MCF 10A (cell line): ENCODE measurements at regions of chr3 and their contacts with region 1.

Region 1: GRCh38 chr3:69200384-69201068 is 78.1 kb upstream of the LMOD3 start:
- DNase-seq: peak; percentile 92
- H3K4me3 Mint-ChIP-seq: peak overlapping the region; percentile 75
- H3K27ac Mint-ChIP-seq: peak overlapping the region; percentile 93
- H3K4me1 Mint-ChIP-seq: peaks cover 24% of the 10 kb centered on the region
- H3K27me3 Mint-ChIP-seq: no peaks in the 10 kb centered on the region
- CTCF ChIP-seq: no peak

Region 2: GRCh38 chr3:69181592-69182211 is 18.8 kb before region 1 on chr3:
- CTCF ChIA-PET with region 1: interaction called, 4 read pairs
- POLR2A ChIA-PET with region 1: interaction called, 21 read pairs
- intact Hi-C with region 1: no loop called
- DNase-seq: peak; percentile 38
- H3K4me3 Mint-ChIP-seq: no peak overlapping the region
- H3K27ac Mint-ChIP-seq: peak overlapping the region; percentile 46
- H3K4me1 Mint-ChIP-seq: peaks cover 24% of the 10 kb centered on the region
- H3K27me3 Mint-ChIP-seq: no peaks in the 10 kb centered on the region
- CTCF ChIP-seq: no peak

Region 3: DNA sequence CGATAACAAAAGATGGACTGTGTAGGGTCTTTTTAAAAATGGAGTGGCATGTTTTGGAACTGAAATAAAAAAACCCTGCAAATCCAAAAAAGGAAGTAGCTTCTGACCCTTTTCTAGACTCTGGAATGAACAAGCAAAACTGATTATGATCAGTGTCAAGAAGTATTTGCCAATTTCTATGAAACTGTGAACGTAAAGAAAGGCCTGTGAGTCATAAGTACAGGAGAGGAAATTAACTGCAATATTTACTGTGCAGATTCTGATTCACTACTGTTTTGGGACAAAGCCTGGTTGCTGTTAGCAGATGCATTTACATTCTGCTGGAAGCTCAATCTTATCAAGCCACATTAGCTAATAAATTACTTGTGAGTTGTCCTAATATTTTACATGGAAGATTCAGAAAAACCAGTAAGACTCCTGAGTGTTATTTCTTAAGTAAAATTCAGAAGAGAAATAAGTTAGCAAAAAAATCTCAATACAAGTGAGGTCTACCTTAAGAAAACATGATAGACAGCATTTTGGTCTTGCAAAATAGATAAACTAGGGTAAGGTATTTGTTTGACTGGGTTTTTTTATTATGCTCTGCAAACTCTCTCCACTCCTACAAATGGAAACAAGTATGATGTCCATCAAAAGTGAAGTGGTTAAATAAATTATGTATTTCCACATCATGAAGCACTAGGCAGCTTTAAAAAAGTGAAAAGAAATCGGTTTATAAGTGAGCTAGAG is 12.0 kb after region 1 on chr3:
- CTCF ChIA-PET with region 1: interaction called, 3 read pairs
- POLR2A ChIA-PET with region 1: interaction called, 47 read pairs
- intact Hi-C with region 1: no loop called
- DNase-seq: peak; percentile 86
- H3K4me3 Mint-ChIP-seq: peak overlapping the region; percentile 16
- H3K27ac Mint-ChIP-seq: peak overlapping the region; percentile 93
- H3K4me1 Mint-ChIP-seq: peaks cover 12% of the 10 kb centered on the region
- H3K27me3 Mint-ChIP-seq: no peaks in the 10 kb centered on the region
- CTCF ChIP-seq: no peak